Mammary epithelial cell (primary cell): ENCODE measurements at regions of chr4 and their contacts with region 1.

Region 1: GRCh38 chr4:122827879-122828601 is 1.4 kb downstream of the FGF2 start:
- DNase-seq: peak; percentile 68
- H3K4me3 ChIP-seq: peak overlapping the region; percentile 88 to 94 (median 92)
- H3K27ac ChIP-seq: peak overlapping the region; percentile 59
- H3K4me1 ChIP-seq: peaks cover 32% of the 10 kb centered on the region
- H3K27me3 ChIP-seq: no peaks in the 10 kb centered on the region
- CTCF ChIP-seq: peak; percentile 34

Region 2: DNA sequence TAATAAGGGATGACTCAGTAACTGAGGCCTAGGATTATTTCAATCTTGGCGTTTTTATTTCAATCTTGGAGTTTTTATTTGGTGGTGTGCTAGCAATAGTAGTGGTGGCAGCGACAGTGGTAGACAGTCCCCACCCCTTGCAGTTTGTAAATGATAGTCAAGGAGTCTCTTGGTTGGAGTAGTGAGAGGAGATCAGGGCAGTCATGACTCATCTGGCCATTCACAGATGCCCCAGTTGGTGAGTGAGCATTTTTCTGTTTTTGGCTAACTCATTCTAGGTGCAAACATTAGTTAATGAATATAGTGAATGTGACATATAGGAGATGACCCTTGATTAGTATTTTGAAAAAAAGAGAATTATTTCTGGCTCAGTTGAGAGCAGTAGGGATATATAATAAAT is 542.8 kb before region 1 on chr4:
- CTCF ChIA-PET with region 1: no interaction called
- dilution Hi-C with region 1: no loop called
- in situ Hi-C with region 1: no loop called
- intact Hi-C with region 1: no loop called
- DNase-seq: peak; percentile 3
- H3K4me3 ChIP-seq: no peak overlapping the region
- H3K27ac ChIP-seq: no peak overlapping the region
- H3K4me1 ChIP-seq: no peaks in the 10 kb centered on the region
- H3K27me3 ChIP-seq: no peaks in the 10 kb centered on the region
- CTCF ChIP-seq: no peak

Region 3: DNA sequence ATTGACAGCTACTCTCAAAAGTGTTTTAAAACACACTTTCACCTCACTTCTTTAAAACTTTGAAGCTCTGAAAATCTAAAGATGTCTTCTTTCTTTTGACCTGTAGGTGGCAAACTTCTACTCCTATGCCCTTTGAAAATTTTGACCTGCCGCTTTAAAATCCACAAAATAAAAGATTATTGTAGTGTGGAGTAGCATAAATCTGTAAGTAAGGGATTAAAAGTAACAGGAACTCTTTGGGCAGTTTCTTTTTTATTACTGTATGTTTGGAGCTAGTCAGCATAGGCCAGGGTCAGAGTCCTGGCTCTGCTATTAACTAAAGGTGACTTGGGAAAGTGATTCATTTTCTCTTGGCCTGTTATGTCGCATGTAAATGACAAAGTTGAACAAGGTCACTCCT is 70.0 kb before region 1 on chr4:
- CTCF ChIA-PET with region 1: no interaction called
- dilution Hi-C with region 1: no loop called
- in situ Hi-C with region 1: loop called in 1 of 2 experiments (anchors 10 kb)
- intact Hi-C with region 1: loop called (anchors 1 kb)
- DNase-seq: no peak
- H3K4me3 ChIP-seq: no peak overlapping the region
- H3K27ac ChIP-seq: no peak overlapping the region
- H3K4me1 ChIP-seq: no peaks in the 10 kb centered on the region
- H3K27me3 ChIP-seq: no peaks in the 10 kb centered on the region
- CTCF ChIP-seq: peak; percentile 44 to 67

Region 4: GRCh38 chr4:122764821-122765215 is 63.2 kb before region 1 on chr4:
- CTCF ChIA-PET with region 1: no interaction called
- dilution Hi-C with region 1: no loop called
- in situ Hi-C with region 1: loop called in 1 of 2 experiments (anchors 10 kb)
- intact Hi-C with region 1: loop called (anchors 2 kb)
- DNase-seq: peak; percentile 67
- H3K4me3 ChIP-seq: no peak overlapping the region
- H3K27ac ChIP-seq: peak overlapping the region; percentile 95
- H3K4me1 ChIP-seq: peaks cover 17% of the 10 kb centered on the region
- H3K27me3 ChIP-seq: no peaks in the 10 kb centered on the region
- CTCF ChIP-seq: no peak

Region 5: GRCh38 chr4:122783301-122784215 is 44.5 kb before region 1 on chr4:
- CTCF ChIA-PET with region 1: no interaction called
- dilution Hi-C with region 1: no loop called
- in situ Hi-C with region 1: no loop called
- intact Hi-C with region 1: loop called (anchors 5 kb)
- DNase-seq: peak; percentile 87
- H3K4me3 ChIP-seq: no peak overlapping the region
- H3K27ac ChIP-seq: peak overlapping the region; percentile 49
- H3K4me1 ChIP-seq: peaks cover 34% of the 10 kb centered on the region
- H3K27me3 ChIP-seq: no peaks in the 10 kb centered on the region
- CTCF ChIP-seq: no peak

Region 6: GRCh38 chr4:122898370-122899150 is 70.5 kb after region 1 on chr4:
- CTCF ChIA-PET with region 1: no interaction called
- dilution Hi-C with region 1: no loop called
- in situ Hi-C with region 1: no loop called
- intact Hi-C with region 1: loop called (anchors 1 kb)
- DNase-seq: peak; percentile 85
- H3K4me3 ChIP-seq: no peak overlapping the region
- H3K27ac ChIP-seq: peak overlapping the region; percentile 57
- H3K4me1 ChIP-seq: peaks cover 8% of the 10 kb centered on the region
- H3K27me3 ChIP-seq: no peaks in the 10 kb centered on the region
- CTCF ChIP-seq: no peak

Region 7: DNA sequence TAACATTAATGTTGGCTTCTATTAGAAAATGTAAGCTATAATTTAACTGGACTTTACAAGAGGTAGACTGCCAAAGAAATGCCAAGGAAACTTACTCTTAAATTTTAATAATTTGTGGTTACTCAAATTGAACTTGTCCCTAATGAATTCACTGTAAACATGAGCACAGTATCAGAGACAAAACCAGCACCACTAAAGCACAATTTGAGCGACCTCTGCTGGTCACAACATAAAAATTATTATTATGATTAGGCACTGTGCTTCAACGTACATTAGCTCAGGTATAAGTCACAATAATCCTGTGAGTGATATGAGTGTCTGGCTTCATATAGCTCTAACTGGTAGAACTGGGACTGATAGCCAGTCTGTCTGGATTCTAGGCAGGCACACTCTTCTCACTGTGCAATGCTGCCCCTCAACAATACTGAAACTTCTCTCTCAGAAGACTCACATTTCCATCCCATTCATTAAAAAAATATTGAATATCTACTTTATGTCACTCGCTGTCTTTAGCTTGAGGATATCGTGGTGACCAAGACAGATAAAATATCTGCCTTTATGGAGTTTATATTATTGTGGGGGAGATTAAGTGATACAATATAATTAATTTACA is 86.4 kb after region 1 on chr4:
- CTCF ChIA-PET with region 1: no interaction called
- dilution Hi-C with region 1: no loop called
- in situ Hi-C with region 1: no loop called
- intact Hi-C with region 1: loop called (anchors 2 kb)
- DNase-seq: peak; percentile 39
- H3K4me3 ChIP-seq: no peak overlapping the region
- H3K27ac ChIP-seq: no peak overlapping the region
- H3K4me1 ChIP-seq: peaks cover 11% of the 10 kb centered on the region
- H3K27me3 ChIP-seq: no peaks in the 10 kb centered on the region
- CTCF ChIP-seq: peak; percentile 30 to 50

Region 8: DNA sequence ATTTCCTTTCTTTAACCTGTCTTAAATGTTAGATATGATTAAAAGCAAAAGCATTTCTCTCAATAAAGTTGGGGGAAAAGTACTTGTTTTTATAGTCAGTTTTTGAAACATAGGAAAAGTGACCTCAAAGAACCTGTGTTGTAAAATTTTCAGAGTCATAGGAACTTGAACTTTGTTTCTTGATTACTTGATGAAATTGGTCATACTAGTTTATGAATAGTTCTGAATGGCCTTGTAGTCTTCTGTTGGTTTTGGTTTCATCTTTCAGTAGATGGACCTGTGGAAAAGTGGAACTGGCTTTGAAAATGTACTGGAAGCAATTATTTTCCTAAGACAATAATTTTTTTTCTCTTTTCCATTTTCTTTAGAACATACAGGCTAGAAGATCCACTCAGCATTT is 316.6 kb after region 1 on chr4:
- CTCF ChIA-PET with region 1: no interaction called
- dilution Hi-C with region 1: no loop called
- in situ Hi-C with region 1: no loop called
- intact Hi-C with region 1: no loop called
- DNase-seq: no peak
- H3K4me3 ChIP-seq: no peak overlapping the region
- H3K27ac ChIP-seq: no peak overlapping the region
- H3K4me1 ChIP-seq: no peaks in the 10 kb centered on the region
- H3K27me3 ChIP-seq: no peaks in the 10 kb centered on the region
- CTCF ChIP-seq: no peak